ENCODE measurements at regions of chr19 and their contacts with region 1.

Region 1: DNA sequence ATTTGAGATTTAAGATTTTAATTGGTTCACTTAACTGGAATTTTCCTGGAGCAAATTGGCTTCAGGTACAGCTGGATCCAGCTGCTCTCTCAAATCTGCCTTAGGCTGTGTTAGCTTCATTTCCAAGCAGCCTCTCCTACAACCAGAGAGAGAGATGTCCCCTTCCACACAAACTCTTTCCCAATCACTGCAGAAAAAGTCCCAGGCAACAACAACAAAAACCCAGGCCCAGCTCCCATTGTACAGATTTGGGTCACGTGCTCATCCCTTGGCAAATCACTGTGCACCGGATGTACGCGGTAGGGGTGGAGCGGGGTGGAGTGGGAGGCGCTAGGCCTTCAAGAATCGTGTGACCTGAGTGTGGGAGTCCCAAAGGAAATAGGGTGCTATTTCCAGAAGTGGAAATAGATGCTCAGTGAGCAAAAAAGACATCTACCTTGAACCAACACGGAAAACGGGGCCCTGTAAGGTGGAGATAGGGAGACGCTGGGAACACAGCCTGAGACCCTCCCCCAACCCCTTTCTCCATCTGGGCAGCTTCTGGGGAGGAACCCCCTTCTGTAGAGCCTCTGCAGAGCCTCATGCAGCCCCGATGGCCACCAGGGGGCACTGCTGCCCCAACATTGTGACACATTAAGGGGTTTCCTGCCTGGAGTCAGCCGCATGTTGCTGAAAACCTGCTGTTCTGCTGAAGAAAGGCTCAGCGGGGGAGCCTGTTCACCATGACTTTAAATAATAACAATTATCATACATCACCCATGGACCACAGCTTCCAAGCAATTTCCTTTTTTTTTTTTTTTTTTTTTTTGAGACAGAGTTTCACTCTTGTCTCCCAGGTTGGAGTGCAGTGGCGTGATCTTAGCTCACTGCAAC is 25.4 kb downstream of the HPN start:
- DNase-seq: peak; percentile 97
- ATAC-seq: peak; percentile 92
- H3K4me3 Mint-ChIP-seq: peak overlapping the region; percentile 57
- H3K27ac Mint-ChIP-seq: peak overlapping the region; percentile 55
- H3K4me1 Mint-ChIP-seq: peaks cover 20% of the 10 kb centered on the region
- H3K27me3 Mint-ChIP-seq: no peaks in the 10 kb centered on the region
- CTCF ChIP-seq: peak; percentile 86

Region 2: GRCh38 chr19:35044317-35045117 is 22.4 kb before region 1 on chr19:
- CTCF ChIA-PET with region 1: interaction called, 20 read pairs
- POLR2A ChIA-PET with region 1: interaction called, 3 read pairs
- intact Hi-C with region 1: no loop called
- DNase-seq: peak; percentile 69
- ATAC-seq: no peak
- H3K4me3 Mint-ChIP-seq: no peak overlapping the region
- H3K27ac Mint-ChIP-seq: no peak overlapping the region
- H3K4me1 Mint-ChIP-seq: peaks cover 13% of the 10 kb centered on the region
- H3K27me3 Mint-ChIP-seq: peaks cover 6% of the 10 kb centered on the region
- CTCF ChIP-seq: peak; percentile 98

Region 3: DNA sequence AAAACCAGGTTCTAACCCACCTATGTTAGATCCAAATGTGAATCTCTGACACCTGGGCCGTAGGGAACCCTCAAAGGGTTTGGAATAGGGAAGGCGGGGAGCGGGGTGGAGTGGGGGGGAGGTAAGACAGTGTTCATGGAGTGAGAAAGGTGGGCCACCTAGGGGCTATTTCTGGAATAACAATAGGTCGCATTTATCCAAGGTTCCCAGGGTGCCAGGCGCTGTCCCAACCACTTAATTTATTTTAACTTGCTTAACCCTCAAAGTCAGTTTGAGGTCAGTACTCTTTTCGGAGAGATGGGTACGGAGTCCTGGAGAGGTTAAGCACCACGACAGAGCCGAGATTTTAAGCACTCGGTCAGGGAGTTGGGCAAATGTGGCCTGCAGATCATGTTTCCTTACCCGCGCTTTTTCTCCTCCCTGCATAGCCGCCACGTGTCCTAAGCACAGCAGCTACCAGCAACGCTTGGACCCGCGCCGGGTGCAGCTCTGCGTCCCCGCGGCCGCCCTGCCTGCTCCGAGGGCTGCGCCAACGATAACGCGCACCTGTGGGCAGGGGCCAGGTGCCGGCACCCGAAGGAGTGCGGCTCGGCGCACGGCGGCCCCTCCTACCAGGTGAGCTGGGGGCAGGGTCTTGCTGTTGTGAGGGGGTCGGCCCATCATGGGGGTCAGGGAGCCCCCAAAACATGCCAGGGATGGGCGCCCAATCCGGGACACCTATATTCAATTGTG is 23.7 kb after region 1 on chr19:
- CTCF ChIA-PET with region 1: interaction called, 21 read pairs
- POLR2A ChIA-PET with region 1: no interaction called
- intact Hi-C with region 1: no loop called
- DNase-seq: peak; percentile 66
- ATAC-seq: peak; percentile 96
- H3K4me3 Mint-ChIP-seq: peak overlapping the region; percentile 32
- H3K27ac Mint-ChIP-seq: no peak overlapping the region
- H3K4me1 Mint-ChIP-seq: peaks cover 8% of the 10 kb centered on the region
- H3K27me3 Mint-ChIP-seq: peaks cover 3% of the 10 kb centered on the region
- CTCF ChIP-seq: peak; percentile 75

Region 4: GRCh38 chr19:35135389-35135909 is 68.5 kb after region 1 on chr19:
- CTCF ChIA-PET with region 1: interaction called, 42 read pairs
- POLR2A ChIA-PET with region 1: interaction called, 4 read pairs
- intact Hi-C with region 1: loop called (anchors 2 kb)
- DNase-seq: peak; percentile 81
- ATAC-seq: peak; percentile 96
- H3K4me3 Mint-ChIP-seq: no peak overlapping the region
- H3K27ac Mint-ChIP-seq: no peak overlapping the region
- H3K4me1 Mint-ChIP-seq: peaks cover 4% of the 10 kb centered on the region
- H3K27me3 Mint-ChIP-seq: no peaks in the 10 kb centered on the region
- CTCF ChIP-seq: peak; percentile 75

Measured in activated CD8-positive, alpha-beta T cell treated with anti-CD3 and anti-CD28 coated beads for 36 hours (primary cell).